ENCODE measurements at regions of chr6 and their contacts with region 1.

Region 1: DNA sequence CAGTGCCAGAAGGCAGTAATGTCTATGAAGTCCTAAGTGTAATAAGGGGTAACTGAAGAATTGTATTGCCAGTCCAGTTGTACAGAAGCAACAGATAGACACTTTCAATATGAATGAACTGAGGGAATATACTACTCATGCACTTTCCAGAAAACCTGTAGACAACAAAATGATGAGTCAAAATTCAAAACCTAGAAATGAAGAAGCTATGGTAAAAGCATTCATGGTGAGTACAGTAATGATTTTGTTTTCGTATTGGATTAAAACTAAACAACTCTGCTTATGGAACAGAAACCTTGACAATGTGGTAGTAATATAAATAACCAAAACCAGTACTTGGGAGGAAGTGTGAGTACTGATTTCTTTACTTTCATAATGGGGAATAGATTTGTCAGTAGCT is 35.0 kb downstream of the ARMC2 start:
- DNase-seq: no peak
- H3K4me3 Mint-ChIP-seq: peak overlapping the region; percentile 56
- H3K27ac Mint-ChIP-seq: peak overlapping the region; percentile 93
- H3K4me1 Mint-ChIP-seq: peaks cover 58% of the 10 kb centered on the region
- H3K27me3 Mint-ChIP-seq: peaks cover 28% of the 10 kb centered on the region

Region 2: DNA sequence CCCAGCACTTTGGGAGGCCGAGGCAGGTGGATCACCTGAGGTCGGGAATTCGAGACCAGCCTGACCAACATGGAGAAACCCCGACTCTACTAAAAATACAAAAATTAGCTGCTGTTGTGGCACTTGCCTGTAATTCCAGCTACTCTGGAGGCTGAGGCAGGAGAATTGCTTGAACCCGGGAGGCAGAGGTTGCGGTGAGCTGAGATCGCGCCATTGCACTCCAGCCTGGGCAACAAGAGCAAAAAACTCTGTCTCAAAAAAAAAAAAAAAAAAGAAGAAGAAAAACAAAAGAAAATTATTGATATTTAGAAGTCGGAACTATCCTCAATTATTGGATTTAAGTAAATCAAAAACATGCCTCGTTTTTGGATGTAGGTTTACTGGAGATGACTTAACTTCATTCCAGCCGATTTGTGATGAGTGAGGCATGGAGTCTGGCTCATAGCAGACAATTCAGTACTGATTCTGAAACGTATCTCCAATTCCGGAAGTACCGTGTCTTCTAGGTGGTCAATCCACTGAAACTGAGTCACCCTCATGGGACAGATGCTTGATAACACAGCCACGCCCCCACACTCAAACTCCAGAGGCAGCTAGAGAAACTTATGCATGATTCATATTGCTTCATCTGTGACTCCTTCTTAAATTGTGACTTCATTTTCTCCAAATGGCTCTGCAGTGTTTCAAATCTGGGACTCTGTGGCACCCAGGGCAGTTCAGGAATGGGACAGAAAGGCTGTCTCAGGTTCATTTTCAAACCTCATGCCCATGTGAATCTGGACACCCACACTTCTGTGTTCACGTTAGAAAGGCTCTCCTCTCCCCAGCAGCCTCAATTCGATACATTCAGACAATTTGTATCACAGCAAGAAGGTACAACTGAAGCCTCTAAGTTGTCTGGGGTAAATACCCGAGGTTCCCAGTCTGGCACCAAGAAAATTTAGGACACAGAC is 145.3 kb before region 1 on chr6:
- intact Hi-C with region 1: no loop called
- DNase-seq: no peak
- H3K4me3 Mint-ChIP-seq: no peak overlapping the region
- H3K27ac Mint-ChIP-seq: no peak overlapping the region
- H3K4me1 Mint-ChIP-seq: no peaks in the 10 kb centered on the region
- H3K27me3 Mint-ChIP-seq: peaks cover 10% of the 10 kb centered on the region

Region 3: GRCh38 chr6:108835218-108835850 is 47.8 kb before region 1 on chr6:
- intact Hi-C with region 1: loop called (anchors 2 kb)
- DNase-seq: peak; percentile 74
- H3K4me3 Mint-ChIP-seq: no peak overlapping the region
- H3K27ac Mint-ChIP-seq: no peak overlapping the region
- H3K4me1 Mint-ChIP-seq: peaks cover 32% of the 10 kb centered on the region
- H3K27me3 Mint-ChIP-seq: peaks cover 16% of the 10 kb centered on the region

Region 4: DNA sequence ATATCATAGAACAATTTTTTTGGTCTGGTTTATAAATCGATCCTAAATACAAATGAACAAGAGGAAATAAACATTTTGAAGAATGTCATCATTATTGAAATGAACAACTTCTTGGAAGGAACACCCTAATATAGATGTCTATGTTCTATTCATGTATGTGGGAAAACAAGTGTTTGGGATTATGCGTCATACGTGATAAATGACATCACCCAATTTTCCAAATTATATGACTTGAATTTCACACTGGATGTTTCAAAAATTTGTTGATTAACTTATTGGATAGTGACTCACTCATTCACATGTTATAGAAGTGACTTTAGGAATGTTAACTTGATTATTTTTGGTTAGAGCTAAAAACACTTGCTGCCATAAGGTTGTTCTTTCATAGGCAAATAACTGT is 16.4 kb before region 1 on chr6:
- intact Hi-C with region 1: loop called (anchors 2 kb)
- DNase-seq: no peak
- H3K4me3 Mint-ChIP-seq: no peak overlapping the region
- H3K27ac Mint-ChIP-seq: peak overlapping the region; percentile 37
- H3K4me1 Mint-ChIP-seq: peaks cover 32% of the 10 kb centered on the region
- H3K27me3 Mint-ChIP-seq: peaks cover 16% of the 10 kb centered on the region

Region 5: GRCh38 chr6:108921547-108922361 is 38.6 kb after region 1 on chr6:
- intact Hi-C with region 1: loop called (anchors 1 kb)
- DNase-seq: no peak
- H3K4me3 Mint-ChIP-seq: peak overlapping the region; percentile 8
- H3K27ac Mint-ChIP-seq: peak overlapping the region; percentile 63
- H3K4me1 Mint-ChIP-seq: peaks cover 34% of the 10 kb centered on the region
- H3K27me3 Mint-ChIP-seq: peaks cover 22% of the 10 kb centered on the region